ENCODE measurements at regions of chrX and their contacts with region 1.

Region 1: GRCh38 chrX:30889147-30890140 is at the start of gene TAB3:
- DNase-seq: peak; percentile 91
- H3K4me3 Mint-ChIP-seq: peak within 1 kb of the TSS; percentile 81
- H3K27ac Mint-ChIP-seq: peak within 1 kb of the TSS; percentile 93
- H3K4me1 Mint-ChIP-seq: peaks cover 27% of the 10 kb centered on the region
- H3K27me3 Mint-ChIP-seq: no peaks in the 10 kb centered on the region
- total RNA-seq, gene TAB3: 24.2 and 24.9 TPM in 2 replicates

Region 2: DNA sequence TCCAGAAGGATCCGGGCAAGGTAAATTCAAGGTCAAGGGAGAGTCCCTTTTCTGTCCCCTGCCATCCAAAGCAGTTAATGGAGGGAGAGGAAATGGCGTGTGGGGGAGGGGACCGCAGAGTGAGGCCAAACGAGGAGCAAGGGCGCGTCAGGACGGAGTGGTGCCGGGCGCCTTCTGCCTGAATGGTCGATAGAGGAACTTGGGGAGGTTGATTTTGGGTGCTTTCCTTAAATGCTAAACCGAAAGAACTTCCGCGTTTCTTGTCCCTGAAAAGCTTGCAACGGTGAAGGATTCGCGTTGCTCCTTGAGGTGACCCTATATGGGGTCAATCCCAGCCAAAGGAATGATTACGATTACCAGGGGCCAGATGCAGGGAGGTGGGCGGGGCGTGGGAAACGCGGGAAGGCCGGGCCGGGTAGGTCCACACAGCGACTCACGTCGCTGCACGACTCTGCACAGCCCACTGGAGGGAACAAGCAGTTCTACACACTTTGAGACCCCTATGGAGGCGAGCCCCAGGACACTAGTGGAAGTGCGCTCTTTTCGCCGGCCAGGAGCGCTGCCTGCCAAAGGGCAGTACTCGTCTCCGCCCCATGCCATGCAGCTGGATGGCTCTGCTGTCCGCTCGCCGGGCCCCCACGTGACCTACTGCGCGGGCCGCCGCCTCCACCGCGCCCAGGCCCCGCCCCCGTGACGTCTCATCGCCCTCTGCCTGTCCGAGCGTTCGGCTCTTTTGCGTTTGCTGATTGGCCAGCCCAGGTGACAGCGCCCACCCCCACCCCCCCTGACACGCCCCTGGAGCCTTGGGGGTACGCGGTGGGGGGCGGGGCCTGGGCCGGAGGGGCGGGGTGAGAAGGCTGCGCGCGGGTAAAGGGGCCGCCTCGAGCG is 236.7 kb before region 1 on chrX:
- intact Hi-C with region 1: loop called (anchors 2 kb)
- DNase-seq: peak; percentile 89
- H3K4me3 Mint-ChIP-seq: peak overlapping the region; percentile 94
- H3K27ac Mint-ChIP-seq: peak overlapping the region; percentile 98
- H3K4me1 Mint-ChIP-seq: peaks cover 42% of the 10 kb centered on the region
- H3K27me3 Mint-ChIP-seq: no peaks in the 10 kb centered on the region

Region 3: DNA sequence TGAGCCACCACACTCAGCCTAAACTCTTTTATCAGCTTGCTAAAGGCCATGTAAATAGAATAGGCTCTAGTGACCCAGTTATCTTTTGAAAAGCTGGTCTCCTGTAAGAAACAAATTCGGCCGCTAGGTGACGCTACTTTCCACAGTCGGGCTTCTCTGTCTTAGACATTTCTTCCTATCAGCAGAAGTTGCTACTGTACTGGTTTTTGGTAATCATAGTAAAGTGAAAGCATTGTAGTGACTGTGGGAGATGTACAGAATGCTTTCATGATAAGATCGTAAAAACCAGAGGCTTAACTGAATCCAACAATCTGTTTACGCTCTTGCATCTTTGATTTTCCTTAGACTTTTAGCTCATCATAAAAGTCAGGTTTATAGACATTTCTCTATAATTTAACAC is 153.6 kb before region 1 on chrX:
- intact Hi-C with region 1: loop called (anchors 5 kb)
- DNase-seq: peak; percentile 66
- H3K4me3 Mint-ChIP-seq: no peak overlapping the region
- H3K27ac Mint-ChIP-seq: no peak overlapping the region
- H3K4me1 Mint-ChIP-seq: peaks cover 9% of the 10 kb centered on the region
- H3K27me3 Mint-ChIP-seq: no peaks in the 10 kb centered on the region

Region 4: DNA sequence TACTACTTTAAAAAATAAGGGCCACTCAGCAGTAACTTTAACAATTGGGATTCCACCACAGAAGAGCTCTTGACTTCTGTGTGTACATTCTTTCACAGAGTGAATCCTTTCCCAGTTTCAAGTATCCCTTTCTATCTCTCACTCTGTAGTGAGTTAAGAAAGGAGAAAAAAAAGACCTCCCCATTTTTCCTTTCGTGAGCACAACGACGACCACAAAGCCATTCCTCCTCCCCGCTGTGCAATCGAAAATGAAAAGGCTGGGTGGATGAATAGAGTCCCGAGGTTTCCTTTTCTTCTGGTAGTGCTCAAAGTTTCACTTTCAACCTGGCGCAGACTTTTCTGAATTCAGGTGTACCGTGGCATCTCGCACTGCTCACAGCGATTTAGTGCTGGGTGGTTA is 58.4 kb before region 1 on chrX:
- intact Hi-C with region 1: loop called (anchors 2 kb)
- DNase-seq: peak; percentile 20
- H3K4me3 Mint-ChIP-seq: peak overlapping the region; percentile 5
- H3K27ac Mint-ChIP-seq: peak overlapping the region; percentile 33
- H3K4me1 Mint-ChIP-seq: peaks cover 22% of the 10 kb centered on the region
- H3K27me3 Mint-ChIP-seq: no peaks in the 10 kb centered on the region

Region 5: GRCh38 chrX:30910124-30910860 is 20.8 kb after region 1 on chrX:
- intact Hi-C with region 1: loop called (anchors 1 kb)
- DNase-seq: peak; percentile 10
- H3K4me3 Mint-ChIP-seq: peak overlapping the region; percentile 42
- H3K27ac Mint-ChIP-seq: peak overlapping the region; percentile 77
- H3K4me1 Mint-ChIP-seq: peaks cover 18% of the 10 kb centered on the region
- H3K27me3 Mint-ChIP-seq: no peaks in the 10 kb centered on the region

Measured in activated T-helper 2 cell treated with anti-CD3 and anti-CD28 coated beads, Interferon-gamma antibody, Interleukin-2, Interleukin-4, amounts not matched to agents 10 μg/mL and 5 μg/mL and 100 μg/mL, durations not matched to agents 14 hours and 24 hours and 36 hours (primary cell).